Ovary (tissue), 10 donors: ENCODE measurements at regions of chr12 and their contacts with region 1.

Region 1: GRCh38 chr12:53180220-53180930 is at the starts of genes CSAD and ZNF740:
- DNase-seq: peak; percentile 96 to 98 (median 98)
- H3K4me3 ChIP-seq: peak within 1 kb of the TSS; percentile 58
- H3K27ac ChIP-seq: peak within 1 kb of the TSS; percentile 69 to 87
- H3K4me1 ChIP-seq: peaks cover 14% of the 10 kb centered on the region
- H3K27me3 ChIP-seq: no peaks in the 10 kb centered on the region
- CTCF ChIP-seq: no peak
- EP300 ChIP-seq: no peak
- POLR2A ChIP-seq: peak; percentile 72
- total RNA-seq, gene CSAD: 24.4 to 36.0 (median 28.0) TPM
- total RNA-seq, gene ZNF740: 9.7 to 56.9 (median 46.4) TPM

Region 2: DNA sequence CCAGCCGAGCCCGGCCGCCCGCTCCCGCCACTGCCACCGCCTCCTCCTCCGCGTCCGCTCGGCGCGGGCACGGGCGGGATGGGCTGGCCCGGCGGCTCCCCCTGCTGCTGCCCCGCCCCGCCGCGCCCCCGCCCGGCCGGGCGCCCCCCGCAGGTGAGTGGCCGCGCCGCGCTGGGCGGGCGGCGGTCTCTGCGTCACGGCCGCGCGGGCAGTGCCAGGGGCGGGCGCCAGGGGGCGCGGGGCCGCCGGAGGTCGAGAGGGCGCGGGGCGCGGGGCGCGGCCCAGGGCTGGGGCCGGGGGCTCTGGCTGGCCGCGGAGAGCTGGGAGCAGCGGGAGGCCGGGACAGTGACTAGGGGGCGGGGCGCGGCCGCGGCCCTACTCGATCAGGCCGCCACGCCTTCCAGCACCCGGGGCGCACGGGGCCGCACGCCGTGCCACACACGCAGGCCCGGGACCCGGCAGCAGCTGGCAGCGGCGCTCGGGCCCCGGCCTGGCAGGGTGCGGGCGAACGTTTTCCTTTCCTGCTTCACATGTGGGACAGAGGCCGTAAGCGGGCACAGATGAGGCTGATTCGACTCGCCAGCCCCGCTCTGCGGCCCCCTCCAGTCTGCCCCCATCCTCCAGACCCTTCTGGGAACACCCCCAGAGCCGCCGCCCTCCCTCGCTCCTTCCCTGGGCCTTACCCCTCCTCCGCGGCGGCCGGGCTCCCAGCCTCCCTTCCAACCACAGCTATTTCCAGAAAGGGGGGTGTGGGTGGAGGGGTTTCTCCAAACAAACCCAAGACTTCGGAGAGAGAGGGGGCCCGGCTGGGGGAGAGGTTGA is 132.9 kb before region 1 on chr12:
- intact Hi-C with region 1: loop called in 1 of 4 experiments (anchors 5 kb)
- DNase-seq: peak; percentile 87 to 91 (median 89)
- H3K4me3 ChIP-seq: peak overlapping the region; percentile 80
- H3K27ac ChIP-seq: peak overlapping the region; percentile 96 to 99
- H3K4me1 ChIP-seq: peaks cover 44% of the 10 kb centered on the region
- H3K27me3 ChIP-seq: no peaks in the 10 kb centered on the region
- CTCF ChIP-seq: peak in 2 of 3 donors; percentile 35 to 36
- EP300 ChIP-seq: no peak
- POLR2A ChIP-seq: peak; percentile 56

Region 3: DNA sequence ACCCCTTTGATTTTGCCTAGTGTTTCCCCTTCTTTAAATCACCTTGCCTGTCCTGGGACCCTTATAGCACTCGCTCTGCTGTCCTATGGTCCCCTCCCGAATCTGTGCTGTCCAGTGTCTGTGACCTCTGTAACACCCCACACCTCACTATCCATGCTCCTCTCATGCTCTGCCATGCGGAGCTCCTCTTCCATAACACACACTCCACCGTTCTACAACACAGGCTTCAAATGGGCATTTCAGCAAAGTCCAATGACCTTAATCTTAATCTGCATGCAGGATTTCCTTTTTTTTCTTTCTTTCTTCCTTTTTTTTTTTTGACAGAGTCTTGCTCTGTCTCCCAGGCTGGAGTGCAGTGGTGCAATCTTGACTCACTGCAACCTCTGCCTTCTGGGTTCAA is 51.2 kb before region 1 on chr12:
- intact Hi-C with region 1: loop called in 1 of 4 experiments (anchors 1 kb)
- DNase-seq: no peak
- H3K4me3 ChIP-seq: no peak overlapping the region
- H3K27ac ChIP-seq: no peak overlapping the region
- H3K4me1 ChIP-seq: no peaks in the 10 kb centered on the region
- H3K27me3 ChIP-seq: no peaks in the 10 kb centered on the region
- CTCF ChIP-seq: no peak
- EP300 ChIP-seq: no peak
- POLR2A ChIP-seq: no peak

Region 4: GRCh38 chr12:53159195-53159839 is 21.1 kb before region 1 on chr12:
- intact Hi-C with region 1: no loop called
- DNase-seq: peak; percentile 67 to 88 (median 83)
- H3K4me3 ChIP-seq: no peak overlapping the region
- H3K27ac ChIP-seq: no peak overlapping the region
- H3K4me1 ChIP-seq: no peaks in the 10 kb centered on the region
- H3K27me3 ChIP-seq: no peaks in the 10 kb centered on the region
- CTCF ChIP-seq: peak; percentile 76 to 90 (median 89)
- EP300 ChIP-seq: no peak
- POLR2A ChIP-seq: no peak

Region 5: GRCh38 chr12:53476769-53477209 is 296.4 kb after region 1 on chr12:
- intact Hi-C with region 1: no loop called
- DNase-seq: no peak
- H3K4me3 ChIP-seq: no peak overlapping the region
- H3K27ac ChIP-seq: no peak overlapping the region
- H3K4me1 ChIP-seq: peaks cover 2% of the 10 kb centered on the region
- H3K27me3 ChIP-seq: no peaks in the 10 kb centered on the region
- CTCF ChIP-seq: no peak
- EP300 ChIP-seq: no peak
- POLR2A ChIP-seq: no peak